Posterior cingulate gyrus (tissue), 11 donors: ENCODE measurements at regions of chr6 and their contacts with region 1.

Region 1: DNA sequence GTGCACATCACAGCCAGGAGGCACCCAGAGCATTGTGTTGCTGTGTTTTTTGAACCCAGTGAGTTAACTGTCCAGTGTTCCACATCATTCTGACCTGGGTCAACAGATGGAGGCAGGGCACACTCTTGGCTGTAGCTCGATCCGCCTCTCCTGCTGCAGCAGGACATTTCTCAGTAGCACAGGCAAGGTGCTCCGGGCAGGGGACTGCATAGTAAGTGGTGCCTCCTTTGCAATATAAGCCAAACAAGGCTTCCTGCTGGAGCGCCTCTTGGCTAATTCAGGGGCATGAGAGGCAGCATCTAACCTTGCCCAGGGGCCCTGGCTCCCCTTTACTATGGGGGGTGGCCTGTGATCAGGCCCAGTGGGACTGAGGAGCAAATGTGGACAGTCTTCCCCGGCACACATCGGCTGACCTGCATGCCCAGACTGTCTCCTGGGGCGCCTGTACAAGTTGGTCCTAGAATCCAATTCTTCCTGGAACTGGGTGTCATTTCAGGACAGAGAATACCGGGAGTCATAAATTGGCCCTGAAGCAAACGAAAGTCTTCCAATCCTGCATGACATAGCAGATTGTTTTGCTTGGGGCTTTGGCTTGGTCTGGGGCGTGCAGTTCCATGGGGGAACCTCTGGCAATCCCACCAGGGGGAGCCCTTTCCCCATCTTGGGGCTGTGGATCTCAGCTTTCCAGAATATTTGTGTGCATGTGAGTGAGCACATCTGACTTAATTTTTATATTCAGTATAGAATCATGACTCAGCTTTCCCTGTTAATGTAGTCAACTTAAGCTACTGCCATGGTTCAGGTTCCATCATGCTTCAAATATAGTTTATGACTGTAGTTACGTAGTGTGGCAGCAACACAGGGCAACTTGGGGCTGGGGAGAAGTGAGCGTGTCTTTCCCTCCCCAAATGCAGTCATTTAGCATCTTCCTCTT is 56.0 kb upstream of the DDR1 start:
- DNase-seq: peak; percentile 75 to 97 (median 89)

Region 2: DNA sequence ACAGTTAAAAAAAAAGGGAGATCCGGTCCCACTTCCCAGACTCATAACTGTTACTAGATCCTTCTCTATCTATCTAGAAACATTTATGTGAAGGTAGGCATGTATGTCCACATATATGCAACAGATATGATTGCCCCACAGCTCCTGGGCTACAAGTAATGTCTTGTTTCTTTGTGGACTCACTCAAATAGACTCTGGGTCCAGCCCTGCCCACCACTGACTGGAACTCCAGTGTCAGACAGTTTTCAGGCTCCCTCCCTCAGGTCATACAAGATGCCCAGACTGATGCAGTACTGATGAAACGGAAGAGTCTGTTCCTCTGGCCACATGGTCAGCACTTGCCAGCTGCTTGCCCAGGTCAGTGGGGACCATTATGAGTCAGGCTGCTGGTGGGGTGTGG is 53.2 kb before region 1 on chr6:
- intact Hi-C with region 1: no loop called
- DNase-seq: peak in 1 of 10 donors; percentile 49

Region 3: GRCh38 chr6:30877419-30878371 is 49.4 kb after region 1 on chr6:
- intact Hi-C with region 1: loop called (anchors 1 kb)
- DNase-seq: peak; percentile 74 to 97 (median 89)

Region 4: GRCh38 chr6:31070711-31071197 is 242.5 kb after region 1 on chr6:
- intact Hi-C with region 1: loop called (anchors 5 kb)
- DNase-seq: peak in 9 of 10 donors; percentile 56 to 96 (median 73)